Vagina (tissue), 2 donors: ENCODE measurements at regions of chr3 and their contacts with region 1.

Region 1: DNA sequence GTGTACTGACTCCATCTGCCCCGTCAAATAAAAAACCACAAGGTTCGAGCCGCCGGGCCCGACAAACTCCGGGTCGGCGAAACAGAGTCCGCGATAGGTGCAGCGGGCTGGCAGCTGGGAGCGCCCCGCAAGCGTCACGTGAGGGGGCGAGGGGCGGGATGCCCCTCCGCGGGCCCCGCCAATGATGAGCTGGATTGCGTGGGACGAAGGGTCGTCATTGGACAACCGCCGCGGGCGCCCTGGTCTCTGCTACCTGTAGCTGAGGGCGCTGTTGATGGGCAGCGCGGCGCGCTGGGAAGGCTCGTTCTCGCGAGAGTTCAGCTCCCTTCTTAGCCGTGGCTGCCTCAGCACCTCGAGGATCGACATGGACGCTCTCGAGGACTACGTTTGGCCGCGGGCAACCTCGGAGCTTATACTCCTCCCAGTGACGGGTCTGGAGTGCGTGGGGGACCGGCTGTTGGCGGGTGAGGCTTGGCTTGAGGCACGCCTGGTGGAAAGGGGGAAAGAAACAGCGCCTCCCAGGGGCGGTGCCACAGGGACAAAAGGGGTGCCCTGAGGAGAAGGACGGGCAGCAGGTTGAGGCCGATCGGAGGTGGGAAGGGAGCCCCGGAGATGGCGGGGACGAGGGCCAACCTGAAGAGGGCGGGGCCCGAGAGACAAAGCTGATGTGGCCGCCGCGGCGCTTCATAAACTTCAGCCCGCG is at the start of gene WDR6:
- DNase-seq: peak in 1 of 2 donors; percentile 98
- H3K4me3 ChIP-seq: peak within 1 kb of the TSS; percentile 57 to 77
- H3K27ac ChIP-seq: peak within 1 kb of the TSS; percentile 99
- H3K4me1 ChIP-seq: peaks cover 20% of the 10 kb centered on the region
- H3K27me3 ChIP-seq: no peaks in the 10 kb centered on the region
- CTCF ChIP-seq: peak in 2 of 3 experiments; percentile 23 to 41
- POLR2A ChIP-seq: peak in 1 of 2 donors; percentile 59
- total RNA-seq, gene WDR6: 109 TPM

Region 2: GRCh38 chr3:49093853-49094767 is 86.9 kb after region 1 on chr3 and contains the start of gene QRICH1:
- intact Hi-C with region 1: loop called (anchors 5 kb)
- DNase-seq: peak in 1 of 2 donors; percentile 98
- H3K4me3 ChIP-seq: peak within 1 kb of the TSS; percentile 80 to 96
- H3K27ac ChIP-seq: peak within 1 kb of the TSS; percentile 98
- H3K4me1 ChIP-seq: peaks cover 52% of the 10 kb centered on the region
- H3K27me3 ChIP-seq: no peaks in the 10 kb centered on the region
- CTCF ChIP-seq: peak in 1 of 3 experiments; percentile 23
- POLR2A ChIP-seq: peak in 1 of 2 donors; percentile 69
- total RNA-seq, gene QRICH1: 124 TPM

Region 3: DNA sequence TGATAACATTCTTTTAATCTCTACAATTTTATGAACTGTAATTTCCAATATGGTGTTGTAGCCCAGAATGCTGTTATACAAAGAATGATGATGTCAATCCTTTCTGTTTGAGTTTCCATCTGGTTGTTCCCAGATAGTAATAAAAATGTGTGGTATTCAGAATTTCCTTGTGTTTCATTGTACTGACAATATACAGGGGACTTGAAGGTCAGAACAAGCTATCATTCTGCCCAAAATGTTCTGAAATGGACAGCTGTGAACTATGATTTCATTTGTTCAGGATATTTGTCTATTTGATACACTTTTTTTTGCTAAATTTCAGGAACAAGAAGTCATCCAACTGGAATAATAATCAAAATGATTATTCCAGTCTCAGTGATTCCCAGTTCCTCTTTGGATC is 229.0 kb after region 1 on chr3:
- intact Hi-C with region 1: no loop called
- DNase-seq: no peak
- H3K4me3 ChIP-seq: no peak overlapping the region
- H3K27ac ChIP-seq: no peak overlapping the region
- H3K4me1 ChIP-seq: no peaks in the 10 kb centered on the region
- H3K27me3 ChIP-seq: no peaks in the 10 kb centered on the region
- CTCF ChIP-seq: no peak
- POLR2A ChIP-seq: no peak